Heart right ventricle (tissue), 16 donors: ENCODE measurements at regions of chr22 and their contacts with region 1.

Region 1: DNA sequence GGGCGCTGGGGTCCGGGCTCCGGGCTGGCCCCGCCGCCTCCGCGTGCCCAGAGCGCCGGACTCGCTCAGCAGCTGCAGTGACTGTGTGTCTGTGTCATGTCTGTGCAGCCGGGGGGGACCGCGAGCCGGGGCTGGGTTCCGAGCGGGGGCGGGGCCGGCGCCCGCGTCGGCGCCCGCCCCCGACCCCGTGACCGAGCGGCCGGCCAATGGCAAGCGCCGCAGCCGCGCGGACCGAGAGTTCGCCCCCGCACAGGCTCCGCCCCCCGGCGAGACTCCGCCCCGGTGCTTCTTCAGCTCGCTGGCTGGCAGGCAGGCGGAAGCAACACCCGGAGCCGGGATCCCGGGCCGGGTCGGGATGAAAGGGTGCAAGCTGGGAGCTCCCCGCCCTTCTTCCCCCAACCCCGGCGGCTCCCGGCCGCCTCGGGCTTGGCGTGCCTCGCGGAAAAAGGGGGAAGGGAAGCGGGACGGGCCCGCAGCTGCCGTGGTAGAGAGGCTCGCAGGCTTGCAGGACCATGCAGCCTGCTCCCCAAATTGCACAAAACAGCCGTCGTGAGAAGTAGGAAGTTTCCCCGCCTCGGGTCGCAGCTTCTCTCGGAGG is 750 bp upstream of the LARGE1 start:
- DNase-seq: peak; percentile 99
- ATAC-seq: peak; percentile 89 to 96 (median 94)
- H3K4me3 ChIP-seq: peak overlapping the region; percentile 49 to 87 (median 72)
- H3K27ac ChIP-seq: peak overlapping the region in 9 of 10 donors; percentile 63 to 91 (median 78)
- H3K4me1 ChIP-seq: peaks cover 0 to 56% (median 37%) of the 10 kb centered on the region in 9 donors
- H3K27me3 ChIP-seq: peaks cover 0 to 57% (median 0%) of the 10 kb centered on the region in 7 donors
- CTCF ChIP-seq: no peak

Region 2: GRCh38 chr22:33519071-33519973 is 401.7 kb before region 1 on chr22:
- intact Hi-C with region 1: loop called in 9 of 10 experiments (anchors 5 to 10 kb)
- DNase-seq: peak in 1 of 2 donors; percentile 63
- ATAC-seq: peak; percentile 49 to 79 (median 62)
- H3K4me3 ChIP-seq: no peak overlapping the region
- H3K27ac ChIP-seq: no peak overlapping the region
- H3K4me1 ChIP-seq: peaks cover 2 to 42% (median 14%) of the 10 kb centered on the region in 9 donors
- H3K27me3 ChIP-seq: no peaks in the 10 kb centered on the region
- CTCF ChIP-seq: peak; percentile 55 to 81 (median 69)

Region 3: GRCh38 chr22:33658775-33659174 is 262.3 kb before region 1 on chr22:
- intact Hi-C with region 1: loop called in 4 of 10 experiments (anchors 5 to 10 kb)
- DNase-seq: peak; percentile 29 to 74
- ATAC-seq: peak; percentile 80 to 93 (median 89)
- H3K4me3 ChIP-seq: no peak overlapping the region
- H3K27ac ChIP-seq: peak overlapping the region in 9 of 10 donors; percentile 36 to 86 (median 65)
- H3K4me1 ChIP-seq: peaks cover 0 to 52% (median 29%) of the 10 kb centered on the region in 9 donors
- H3K27me3 ChIP-seq: no peaks in the 10 kb centered on the region
- CTCF ChIP-seq: no peak

Region 4: DNA sequence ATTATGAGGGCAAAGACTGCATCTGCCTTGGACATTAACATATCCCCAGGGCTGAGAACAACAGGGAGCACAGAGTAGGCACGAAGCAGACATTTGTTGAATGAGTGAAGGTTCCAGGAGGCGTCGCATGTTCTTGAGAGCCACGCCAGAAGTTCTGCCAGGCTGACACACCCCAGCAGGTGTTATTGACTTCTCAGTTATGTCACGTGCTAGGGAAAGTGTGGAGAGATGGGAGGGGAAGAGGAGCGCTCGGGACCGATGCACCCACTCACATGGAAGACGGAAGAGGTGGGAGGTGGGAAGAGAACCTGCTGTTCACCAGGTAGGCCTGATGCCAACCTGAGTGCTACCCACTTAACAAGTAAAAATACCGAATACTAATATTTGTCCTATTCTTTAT is 233.6 kb before region 1 on chr22:
- intact Hi-C with region 1: no loop called
- DNase-seq: no peak
- ATAC-seq: no peak
- H3K4me3 ChIP-seq: no peak overlapping the region
- H3K27ac ChIP-seq: no peak overlapping the region
- H3K4me1 ChIP-seq: peaks cover 0 to 8% (median 0%) of the 10 kb centered on the region in 9 donors
- H3K27me3 ChIP-seq: no peaks in the 10 kb centered on the region
- CTCF ChIP-seq: no peak

Region 5: DNA sequence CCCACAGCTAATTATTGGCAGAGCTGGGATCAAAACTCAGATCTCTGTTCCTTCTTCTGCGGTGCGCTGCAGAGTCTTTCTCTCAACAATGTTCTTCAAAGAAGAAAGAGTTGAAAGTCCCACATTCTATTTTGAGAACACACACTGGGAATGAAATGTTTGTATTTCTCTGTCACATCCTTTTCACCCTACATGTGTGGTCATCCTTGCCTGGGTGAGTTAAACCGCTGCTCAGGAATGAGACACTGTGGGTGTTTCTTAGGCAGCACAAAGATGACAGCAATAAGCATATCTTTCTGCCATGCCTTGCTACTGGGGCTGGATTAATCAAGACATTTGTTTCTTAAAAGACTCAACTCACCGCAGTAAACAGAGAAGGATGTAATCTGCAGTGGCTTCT is 223.4 kb before region 1 on chr22:
- intact Hi-C with region 1: no loop called
- DNase-seq: no peak
- ATAC-seq: no peak
- H3K4me3 ChIP-seq: no peak overlapping the region
- H3K27ac ChIP-seq: no peak overlapping the region
- H3K4me1 ChIP-seq: peaks cover 0 to 21% (median 5%) of the 10 kb centered on the region in 9 donors
- H3K27me3 ChIP-seq: no peaks in the 10 kb centered on the region
- CTCF ChIP-seq: no peak

Region 6: GRCh38 chr22:33779243-33779642 is 141.8 kb before region 1 on chr22:
- intact Hi-C with region 1: loop called in 4 of 10 experiments (anchors 10 kb)
- DNase-seq: no peak
- ATAC-seq: no peak
- H3K4me3 ChIP-seq: no peak overlapping the region
- H3K27ac ChIP-seq: peak overlapping the region in 4 of 10 donors; percentile 46 to 79 (median 72)
- H3K4me1 ChIP-seq: peaks cover 0 to 60% (median 36%) of the 10 kb centered on the region in 9 donors
- H3K27me3 ChIP-seq: no peaks in the 10 kb centered on the region
- CTCF ChIP-seq: no peak

Region 7: GRCh38 chr22:33873186-33873585 is 47.8 kb before region 1 on chr22:
- intact Hi-C with region 1: loop called in 1 of 10 experiments (anchors 5 kb)
- DNase-seq: peak; percentile 48 to 72
- ATAC-seq: peak; percentile 69 to 94 (median 84)
- H3K4me3 ChIP-seq: peak overlapping the region in 3 of 10 donors; percentile 15 to 21 (median 19)
- H3K27ac ChIP-seq: peak overlapping the region in 9 of 10 donors; percentile 57 to 88 (median 73)
- H3K4me1 ChIP-seq: peaks cover 21 to 82% (median 49%) of the 10 kb centered on the region in 9 donors
- H3K27me3 ChIP-seq: no peaks in the 10 kb centered on the region
- CTCF ChIP-seq: no peak

Region 8: GRCh38 chr22:34017205-34017604 is 96.2 kb after region 1 on chr22:
- intact Hi-C with region 1: no loop called
- DNase-seq: no peak
- ATAC-seq: no peak
- H3K4me3 ChIP-seq: no peak overlapping the region
- H3K27ac ChIP-seq: no peak overlapping the region
- H3K4me1 ChIP-seq: no peaks in the 10 kb centered on the region
- H3K27me3 ChIP-seq: peaks cover 0 to 7% (median 0%) of the 10 kb centered on the region in 7 donors
- CTCF ChIP-seq: no peak

Region 9: DNA sequence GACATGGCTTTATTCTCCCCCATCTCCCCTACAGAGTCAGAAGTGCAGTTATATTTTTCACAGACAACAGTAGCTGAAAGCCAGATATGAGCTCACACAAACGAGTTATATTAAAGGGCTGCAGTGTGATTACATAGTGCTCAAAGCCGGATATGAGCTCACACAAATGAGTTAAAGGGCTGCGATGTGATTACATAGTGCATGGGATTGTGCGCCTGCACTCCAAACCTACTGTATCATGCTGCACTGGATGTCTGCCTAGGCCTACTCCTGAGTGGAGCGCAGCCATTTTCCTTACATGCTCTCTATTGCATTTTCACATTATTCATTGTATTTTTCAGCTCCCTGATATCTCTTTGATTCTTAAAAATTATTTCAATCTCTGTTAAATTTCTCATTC is 413.9 kb after region 1 on chr22:
- intact Hi-C with region 1: loop called in 4 of 10 experiments (anchors 5 to 10 kb)
- DNase-seq: no peak
- ATAC-seq: no peak
- H3K4me3 ChIP-seq: no peak overlapping the region
- H3K27ac ChIP-seq: no peak overlapping the region
- H3K4me1 ChIP-seq: no peaks in the 10 kb centered on the region
- H3K27me3 ChIP-seq: no peaks in the 10 kb centered on the region
- CTCF ChIP-seq: no peak